ENCODE measurements at regions of chr7 and their contacts with region 1.

Region 1: GRCh38 chr7:7529328-7529727 is 6.3 kb downstream of the COL28A1 start:
- DNase-seq: no peak

Region 2: DNA sequence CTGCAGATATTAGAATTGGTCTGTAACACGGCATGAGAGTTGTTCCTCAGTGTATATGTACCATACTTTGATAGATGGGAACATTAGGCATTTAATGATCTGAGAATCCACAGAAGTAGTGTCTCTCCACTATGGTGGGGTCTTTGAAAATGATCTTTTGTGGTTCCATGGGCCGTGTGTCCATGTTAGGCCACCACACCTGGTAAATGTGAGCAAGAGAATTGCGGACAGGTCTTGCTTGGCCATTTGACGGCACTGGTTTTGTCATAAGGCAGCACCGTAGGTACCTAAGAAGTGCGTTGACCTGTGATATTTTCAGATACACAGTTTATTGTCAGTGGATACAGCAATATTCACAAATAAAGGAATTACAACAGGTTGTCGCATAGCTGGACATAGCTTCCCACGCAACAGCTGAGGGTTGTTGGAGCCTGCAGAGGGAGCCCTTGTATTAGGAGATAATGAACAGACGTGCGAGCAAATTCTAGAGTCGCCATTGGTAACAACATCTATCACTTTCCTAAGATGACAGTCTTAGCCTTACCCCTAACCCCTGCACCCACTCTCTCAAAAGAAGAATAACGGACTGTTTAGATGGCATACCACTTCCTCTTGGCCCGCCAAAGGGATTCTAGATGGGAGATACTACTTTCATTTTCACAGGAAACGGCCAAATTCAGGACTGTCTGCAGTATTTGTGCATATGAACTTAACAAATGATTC is 105.0 kb before region 1 on chr7:
- in situ Hi-C with region 1: loop called (anchors 25 kb)
- DNase-seq: peak; percentile 84